Tibial artery (tissue), 4 donors: ENCODE measurements at regions of chr20 and their contacts with region 1.

Region 1: GRCh38 chr20:62050166-62051120 is 15.2 kb downstream of the TAF4 start:
- DNase-seq: no peak
- H3K4me3 ChIP-seq: no peak overlapping the region
- H3K27ac ChIP-seq: no peak overlapping the region
- H3K4me1 ChIP-seq: peaks cover 0 to 4% (median 0%) of the 10 kb centered on the region in 4 donors
- H3K27me3 ChIP-seq: no peaks in the 10 kb centered on the region
- CTCF ChIP-seq: no peak

Region 2: GRCh38 chr20:61874501-61875026 is 175.9 kb before region 1 on chr20:
- intact Hi-C with region 1: no loop called
- DNase-seq: no peak
- H3K4me3 ChIP-seq: no peak overlapping the region
- H3K27ac ChIP-seq: no peak overlapping the region
- H3K4me1 ChIP-seq: no peaks in the 10 kb centered on the region
- H3K27me3 ChIP-seq: peaks cover 0 to 48% of the 10 kb centered on the region in 2 donors
- CTCF ChIP-seq: no peak

Region 3: DNA sequence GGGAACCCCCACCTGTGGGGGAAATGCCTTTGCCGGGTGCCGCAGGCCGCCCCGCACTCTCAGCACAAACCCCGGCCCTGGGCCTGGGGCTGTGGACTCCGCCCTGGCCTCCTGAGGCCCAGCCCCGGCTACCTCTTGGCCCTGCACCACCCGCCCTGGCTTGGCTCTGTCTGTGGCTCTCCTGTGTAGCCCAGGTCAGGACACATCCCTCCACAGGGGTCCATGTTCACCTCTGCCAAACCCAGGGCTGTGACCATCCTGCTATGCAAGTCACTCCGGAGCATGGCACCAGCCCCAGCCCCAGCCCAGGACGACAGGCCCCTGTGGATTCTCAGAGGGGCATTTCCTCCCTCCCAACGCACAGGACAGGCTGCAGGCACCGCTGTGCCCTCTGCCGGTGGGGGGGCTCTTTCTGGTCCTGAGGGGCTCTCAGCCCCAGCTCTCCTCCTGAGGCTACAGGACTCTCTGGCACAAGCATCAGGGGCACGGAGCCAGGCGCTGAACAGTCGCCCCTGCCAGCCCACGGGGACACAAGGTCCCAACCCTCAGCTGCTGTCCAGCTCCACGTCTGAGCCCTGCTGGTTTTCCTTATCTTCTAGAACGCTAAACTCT is 30.5 kb before region 1 on chr20:
- intact Hi-C with region 1: loop called (anchors 5 kb)
- DNase-seq: no peak
- H3K4me3 ChIP-seq: no peak overlapping the region
- H3K27ac ChIP-seq: no peak overlapping the region
- H3K4me1 ChIP-seq: peaks cover 0 to 36% (median 29%) of the 10 kb centered on the region in 4 donors
- H3K27me3 ChIP-seq: no peaks in the 10 kb centered on the region
- CTCF ChIP-seq: no peak

Region 4: DNA sequence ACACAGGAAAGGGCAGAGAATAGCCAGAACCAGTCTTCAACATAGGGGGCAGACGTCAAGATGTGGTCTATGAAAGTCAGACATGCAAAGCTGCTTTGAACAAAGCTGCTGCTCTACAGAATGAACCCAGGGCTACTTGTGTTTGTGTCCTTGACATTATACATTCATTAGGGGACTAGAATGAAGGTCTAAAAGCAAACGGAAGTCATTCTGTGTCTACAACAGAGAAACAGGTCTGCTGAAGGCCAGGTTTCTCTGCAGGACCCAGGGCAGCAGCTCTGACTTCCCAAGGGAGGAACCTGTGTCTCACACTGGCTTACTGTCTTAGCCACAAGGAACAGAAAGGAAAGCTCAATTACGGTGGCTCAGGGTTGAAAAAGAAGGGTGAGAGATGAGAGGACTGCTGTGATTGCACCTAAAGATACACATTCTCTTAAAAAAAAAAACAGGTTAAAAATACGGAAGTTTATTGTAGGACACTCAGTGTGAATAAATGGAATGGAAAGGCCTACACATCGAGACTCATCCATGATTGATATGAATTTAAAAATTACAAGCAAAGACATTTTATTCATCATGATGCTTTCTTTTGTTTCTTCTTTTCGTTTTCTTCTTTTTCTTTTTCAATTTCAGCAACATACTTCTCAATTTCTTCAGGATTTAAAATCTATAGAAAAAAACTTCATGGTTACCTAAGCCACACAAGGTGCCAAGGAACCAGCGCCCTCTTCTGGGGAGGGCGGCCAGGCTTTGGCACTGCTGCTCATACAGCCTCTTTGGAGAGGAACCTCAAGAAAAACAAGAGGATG is 86.0 kb after region 1 on chr20:
- intact Hi-C with region 1: no loop called
- DNase-seq: peak; percentile 70 to 81
- H3K4me3 ChIP-seq: no peak overlapping the region
- H3K27ac ChIP-seq: no peak overlapping the region
- H3K4me1 ChIP-seq: peaks cover under 1 to 17% (median 12%) of the 10 kb centered on the region in 4 donors
- H3K27me3 ChIP-seq: no peaks in the 10 kb centered on the region
- CTCF ChIP-seq: peak; percentile 66 to 74